ENCODE measurements at regions of chr15 and their contacts with region 1.

Region 1: GRCh38 chr15:66196602-66197001 is 56.9 kb downstream of the MEGF11 start:
- DNase-seq: no peak
- ATAC-seq: no peak
- H3K4me3 Mint-ChIP-seq: no peak overlapping the region
- H3K27ac Mint-ChIP-seq: no peak overlapping the region
- H3K4me1 Mint-ChIP-seq: peaks cover 3% of the 10 kb centered on the region
- H3K27me3 Mint-ChIP-seq: peaks cover 1% of the 10 kb centered on the region

Region 2: GRCh38 chr15:66004618-66005262 is 191.9 kb before region 1 on chr15:
- CTCF ChIA-PET with region 1: no interaction called
- POLR2A ChIA-PET with region 1: no interaction called
- intact Hi-C with region 1: loop called in 1 of 2 experiments (anchors 5 kb)
- DNase-seq: peak; percentile 40
- ATAC-seq: no peak
- H3K4me3 Mint-ChIP-seq: no peak overlapping the region
- H3K27ac Mint-ChIP-seq: no peak overlapping the region
- H3K4me1 Mint-ChIP-seq: no peaks in the 10 kb centered on the region
- H3K27me3 Mint-ChIP-seq: peaks cover 16% of the 10 kb centered on the region

Region 3: GRCh38 chr15:66163553-66163952 is 33.0 kb before region 1 on chr15:
- CTCF ChIA-PET with region 1: no interaction called
- POLR2A ChIA-PET with region 1: no interaction called
- intact Hi-C with region 1: no loop called
- DNase-seq: no peak
- ATAC-seq: no peak
- H3K4me3 Mint-ChIP-seq: no peak overlapping the region
- H3K27ac Mint-ChIP-seq: no peak overlapping the region
- H3K4me1 Mint-ChIP-seq: no peaks in the 10 kb centered on the region
- H3K27me3 Mint-ChIP-seq: no peaks in the 10 kb centered on the region

Region 4: GRCh38 chr15:66221126-66221525 is 24.5 kb after region 1 on chr15:
- CTCF ChIA-PET with region 1: no interaction called
- POLR2A ChIA-PET with region 1: no interaction called
- intact Hi-C with region 1: no loop called
- DNase-seq: no peak
- ATAC-seq: no peak
- H3K4me3 Mint-ChIP-seq: no peak overlapping the region
- H3K27ac Mint-ChIP-seq: no peak overlapping the region
- H3K4me1 Mint-ChIP-seq: no peaks in the 10 kb centered on the region
- H3K27me3 Mint-ChIP-seq: no peaks in the 10 kb centered on the region